Activated naive CD4-positive, alpha-beta T cell treated with anti-CD3 and anti-CD28 coated beads for 36 hours (primary cell): ENCODE measurements at regions of chr20 and their contacts with region 1.

Region 1: DNA sequence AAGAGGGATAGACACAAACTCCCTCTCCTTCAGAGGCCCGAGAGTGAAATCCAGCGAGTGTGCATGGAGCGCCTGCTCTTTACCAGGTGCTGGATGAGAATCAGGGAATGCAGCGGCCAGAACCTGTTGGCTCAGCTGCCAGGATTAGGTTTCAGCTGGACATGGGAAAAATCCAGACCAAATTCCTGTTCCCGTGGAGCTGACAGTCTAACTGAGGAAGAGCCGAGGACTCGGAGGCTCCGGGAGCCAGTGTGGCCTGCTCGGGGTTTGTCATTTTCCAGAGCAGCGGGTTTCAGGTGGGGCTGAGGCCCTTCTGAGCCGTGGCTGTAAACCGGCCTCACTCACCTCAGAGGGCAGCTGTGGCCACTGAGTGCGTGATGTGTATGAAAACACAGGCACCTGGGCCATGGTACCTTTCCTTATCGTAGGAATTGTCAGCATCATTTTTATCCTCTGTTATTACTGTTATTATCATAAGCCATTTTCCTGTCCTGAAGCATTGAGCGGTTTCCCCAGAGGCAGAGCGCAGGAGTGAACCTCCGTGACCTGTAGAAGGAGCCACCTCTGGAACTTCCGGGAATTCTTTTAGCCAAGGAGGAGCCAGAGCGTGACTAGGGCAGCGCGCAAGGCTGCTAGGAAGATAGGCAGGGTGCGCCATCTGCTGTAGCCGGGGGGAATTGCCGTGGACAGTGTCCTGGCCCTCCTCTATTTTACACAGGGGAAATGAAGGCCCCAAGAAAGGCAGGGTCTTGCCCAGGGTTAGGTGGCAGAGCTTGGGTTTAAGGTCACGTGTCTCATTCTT is 27.3 kb downstream of the PKIG start:
- DNase-seq: peak; percentile 91
- H3K4me3 Mint-ChIP-seq: peak overlapping the region; percentile 58
- H3K27ac Mint-ChIP-seq: peak overlapping the region; percentile 82
- H3K4me1 Mint-ChIP-seq: peaks cover 19% of the 10 kb centered on the region
- H3K27me3 Mint-ChIP-seq: no peaks in the 10 kb centered on the region

Region 2: GRCh38 chr20:44217342-44218092 is 392.2 kb before region 1 on chr20:
- CTCF ChIA-PET with region 1: interaction called, 29 read pairs
- intact Hi-C with region 1: loop called (anchors 1 kb)
- DNase-seq: peak; percentile 83
- H3K4me3 Mint-ChIP-seq: peak overlapping the region; percentile 65
- H3K27ac Mint-ChIP-seq: peak overlapping the region; percentile 75
- H3K4me1 Mint-ChIP-seq: peaks cover 55% of the 10 kb centered on the region
- H3K27me3 Mint-ChIP-seq: no peaks in the 10 kb centered on the region

Region 3: DNA sequence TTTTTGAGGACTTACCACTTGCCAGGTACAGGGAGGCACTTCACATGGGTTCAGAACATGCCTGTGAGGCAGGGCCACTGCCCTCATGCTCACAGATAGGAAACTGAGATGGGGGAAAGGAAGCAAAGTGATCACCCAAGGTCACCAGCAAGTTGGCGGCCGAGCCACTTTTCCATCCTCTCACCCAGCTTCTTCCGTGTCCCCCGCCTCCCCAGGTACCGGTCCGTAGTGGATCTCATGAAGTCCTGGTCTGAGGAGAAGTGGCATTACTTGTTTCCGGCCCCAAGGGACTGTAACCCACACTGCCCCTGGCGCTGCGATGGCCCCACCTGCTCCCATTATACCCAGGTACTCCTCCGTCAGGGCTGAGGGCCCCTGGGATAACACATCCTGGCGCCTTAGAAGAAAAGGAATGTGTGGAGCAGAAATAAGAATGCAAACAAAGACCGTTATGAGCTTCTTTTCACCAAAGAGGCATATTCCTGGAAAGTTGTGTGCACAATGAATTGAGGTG is 266.5 kb before region 1 on chr20:
- CTCF ChIA-PET with region 1: no interaction called
- intact Hi-C with region 1: no loop called
- DNase-seq: no peak
- H3K4me3 Mint-ChIP-seq: no peak overlapping the region
- H3K27ac Mint-ChIP-seq: no peak overlapping the region
- H3K4me1 Mint-ChIP-seq: no peaks in the 10 kb centered on the region
- H3K27me3 Mint-ChIP-seq: no peaks in the 10 kb centered on the region

Region 4: GRCh38 chr20:44388466-44389023 is 221.2 kb before region 1 on chr20:
- CTCF ChIA-PET with region 1: interaction called, 23 read pairs
- intact Hi-C with region 1: loop called (anchors 1 kb)
- DNase-seq: peak; percentile 90
- H3K4me3 Mint-ChIP-seq: peak overlapping the region; percentile 22
- H3K27ac Mint-ChIP-seq: no peak overlapping the region
- H3K4me1 Mint-ChIP-seq: peaks cover 11% of the 10 kb centered on the region
- H3K27me3 Mint-ChIP-seq: peaks cover 3% of the 10 kb centered on the region

Region 5: DNA sequence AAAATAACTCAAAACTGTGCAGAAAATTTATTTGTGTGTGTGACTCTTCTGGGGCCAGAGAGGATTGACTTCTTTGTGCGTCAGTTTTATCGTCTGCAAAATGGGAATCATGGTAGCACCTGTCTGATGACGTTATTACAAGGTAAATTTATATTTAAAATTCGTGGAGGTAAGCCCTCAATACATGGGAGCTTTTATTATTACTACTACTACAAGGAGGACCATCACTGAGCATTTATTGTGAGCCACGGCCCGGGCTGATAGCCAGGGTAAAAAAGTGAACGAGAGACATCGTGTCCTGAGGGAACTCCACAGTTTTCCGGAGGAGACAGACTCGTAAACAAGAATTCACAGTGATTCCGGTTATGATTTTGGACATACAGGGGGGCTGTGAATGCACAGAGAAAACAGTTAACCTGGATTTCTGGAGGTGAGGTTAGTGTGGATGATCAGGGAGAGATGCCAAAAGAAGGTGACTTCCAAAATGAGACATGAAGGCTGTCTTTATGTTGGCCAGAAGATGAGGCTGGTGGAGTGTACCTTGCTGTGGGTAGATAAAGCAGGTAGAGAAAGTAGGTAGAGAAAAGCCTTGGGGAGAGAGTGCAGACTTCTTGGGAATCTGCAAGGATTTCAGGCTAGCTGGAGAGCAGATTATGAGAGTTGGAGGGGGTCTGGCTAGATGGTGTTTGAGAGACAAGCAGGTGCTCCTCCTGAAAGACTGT is 77.3 kb before region 1 on chr20:
- CTCF ChIA-PET with region 1: interaction called, 8 read pairs
- intact Hi-C with region 1: loop called (anchors 1 kb)
- DNase-seq: no peak
- H3K4me3 Mint-ChIP-seq: no peak overlapping the region
- H3K27ac Mint-ChIP-seq: no peak overlapping the region
- H3K4me1 Mint-ChIP-seq: peaks cover 4% of the 10 kb centered on the region
- H3K27me3 Mint-ChIP-seq: no peaks in the 10 kb centered on the region

Region 6: DNA sequence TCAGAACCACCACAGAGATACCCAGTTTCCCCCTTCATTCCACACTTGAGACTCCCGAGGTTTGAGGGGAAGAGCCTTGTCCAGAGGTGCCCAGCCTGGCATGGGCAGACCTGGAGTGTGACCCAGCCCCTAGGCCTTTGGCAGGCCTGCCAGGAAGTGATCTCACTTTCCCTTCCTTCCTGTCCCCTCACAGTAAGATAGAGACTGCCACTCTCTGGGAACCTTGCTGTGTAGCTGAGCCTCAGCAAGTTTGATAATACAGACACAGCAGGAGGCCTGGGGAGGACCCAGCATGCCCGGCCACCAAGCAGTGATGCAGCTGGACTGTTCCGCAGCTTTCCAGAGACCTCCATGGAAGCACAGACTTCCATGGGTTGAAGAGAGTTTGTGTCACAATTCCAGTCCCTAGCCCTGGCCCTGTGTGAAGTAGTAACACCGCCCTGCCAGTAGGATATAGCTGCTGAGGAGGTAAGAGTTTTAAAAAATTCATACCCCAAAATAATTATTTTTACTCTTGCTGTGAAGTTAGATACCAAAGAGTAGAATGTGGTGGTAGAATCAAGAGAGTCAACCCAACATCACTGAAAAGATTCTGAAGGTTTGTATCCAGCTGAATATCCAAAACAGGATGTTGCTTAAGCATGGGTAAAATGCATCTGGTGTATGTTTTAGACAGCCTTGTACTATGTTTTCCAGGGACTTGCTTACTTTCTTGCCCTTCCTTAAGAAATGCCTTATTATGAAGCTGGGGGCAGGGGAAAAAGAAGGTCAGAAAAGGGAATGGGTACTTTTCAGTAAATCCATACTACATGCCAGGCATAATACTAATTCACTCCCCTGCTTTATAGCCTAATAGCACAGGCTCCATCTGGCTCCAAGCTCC is 11.0 kb before region 1 on chr20:
- CTCF ChIA-PET with region 1: interaction called, 27 read pairs
- intact Hi-C with region 1: no loop called
- DNase-seq: peak; percentile 61
- H3K4me3 Mint-ChIP-seq: peak overlapping the region; percentile 70
- H3K27ac Mint-ChIP-seq: peak overlapping the region; percentile 81
- H3K4me1 Mint-ChIP-seq: peaks cover 32% of the 10 kb centered on the region
- H3K27me3 Mint-ChIP-seq: no peaks in the 10 kb centered on the region

Region 7: GRCh38 chr20:44683263-44684046 is 73.7 kb after region 1 on chr20:
- CTCF ChIA-PET with region 1: interaction called, 10 read pairs
- intact Hi-C with region 1: no loop called
- DNase-seq: peak; percentile 72
- H3K4me3 Mint-ChIP-seq: no peak overlapping the region
- H3K27ac Mint-ChIP-seq: no peak overlapping the region
- H3K4me1 Mint-ChIP-seq: peaks cover 4% of the 10 kb centered on the region
- H3K27me3 Mint-ChIP-seq: no peaks in the 10 kb centered on the region